ENCODE measurements at regions of chr10 and their contacts with region 1.

Region 1: GRCh38 chr10:80444646-80445319 is 9.3 kb upstream of the TSPAN14 start:
- DNase-seq: peak; percentile 69 to 82 (median 77)
- H3K4me3 ChIP-seq: no peak overlapping the region
- H3K4me3 Mint-ChIP-seq: peak overlapping the region in 1 of 2 donors; percentile 40
- H3K27ac ChIP-seq: no peak overlapping the region
- H3K27ac Mint-ChIP-seq: peak overlapping the region in 2 of 7 donors; percentile 43 to 60
- H3K4me1 ChIP-seq: peaks cover 33 to 47% of the 10 kb centered on the region in 2 donors
- H3K4me1 Mint-ChIP-seq: peaks cover 44% of the 10 kb centered on the region
- H3K27me3 ChIP-seq: no peaks in the 10 kb centered on the region
- H3K27me3 Mint-ChIP-seq: peaks cover 2 to 3% (median 2%) of the 10 kb centered on the region in 3 donors
- CTCF ChIP-seq: peak; percentile 72

Region 2: DNA sequence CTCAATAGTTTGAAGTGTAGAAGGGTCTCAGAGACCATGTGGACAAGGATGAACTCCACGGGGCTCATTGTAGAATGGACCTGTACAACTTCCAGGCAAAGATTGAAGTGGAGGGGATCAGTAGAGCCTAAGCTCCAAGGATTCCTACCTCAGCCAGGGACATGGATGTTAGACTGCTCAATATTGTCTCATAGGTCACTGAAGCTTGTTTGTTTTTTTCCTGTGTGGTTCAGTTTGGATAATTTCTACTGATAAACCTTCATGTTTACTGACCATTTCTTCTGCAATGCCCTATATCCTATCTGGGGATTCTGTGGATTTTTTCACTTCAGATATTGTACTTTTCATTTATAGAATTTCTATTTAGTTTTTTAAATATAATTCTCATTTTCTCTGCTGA is 79.3 kb before region 1 on chr10:
- intact Hi-C with region 1: no loop called
- DNase-seq: no peak
- H3K4me3 ChIP-seq: no peak overlapping the region
- H3K4me3 Mint-ChIP-seq: peak overlapping the region in 1 of 2 donors; percentile 39
- H3K27ac ChIP-seq: no peak overlapping the region
- H3K27ac Mint-ChIP-seq: no peak overlapping the region
- H3K4me1 ChIP-seq: no peaks in the 10 kb centered on the region
- H3K4me1 Mint-ChIP-seq: no peaks in the 10 kb centered on the region
- H3K27me3 ChIP-seq: no peaks in the 10 kb centered on the region
- H3K27me3 Mint-ChIP-seq: peaks cover 0 to 3% (median 2%) of the 10 kb centered on the region in 3 donors
- CTCF ChIP-seq: no peak

Region 3: DNA sequence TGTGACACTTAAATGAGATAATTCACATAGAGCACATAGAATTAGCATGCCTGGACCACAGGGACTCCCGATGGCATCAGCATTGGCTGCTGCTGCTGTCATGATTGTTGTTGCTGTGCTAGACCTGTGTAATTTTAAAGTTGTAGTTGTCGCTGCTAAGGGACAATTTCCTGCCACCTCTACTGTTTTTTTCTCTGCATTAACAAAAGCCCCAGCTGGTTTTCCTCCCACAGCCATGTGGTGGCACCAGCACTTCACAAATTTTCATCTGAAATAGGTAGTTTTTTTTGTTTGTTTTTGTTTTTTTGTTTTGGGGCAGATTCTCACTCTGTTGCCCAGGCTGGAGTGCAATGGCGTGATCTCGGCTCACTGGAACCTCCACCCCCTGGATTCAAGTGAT is 61.8 kb before region 1 on chr10:
- intact Hi-C with region 1: loop called in 1 of 2 experiments (anchors 2 kb)
- DNase-seq: peak; percentile 27 to 50 (median 45)
- H3K4me3 ChIP-seq: no peak overlapping the region
- H3K4me3 Mint-ChIP-seq: peak overlapping the region in 1 of 2 donors; percentile 1
- H3K27ac ChIP-seq: no peak overlapping the region
- H3K27ac Mint-ChIP-seq: peak overlapping the region in 1 of 7 donors; percentile 50
- H3K4me1 ChIP-seq: peaks cover 5 to 9% of the 10 kb centered on the region in 2 donors
- H3K4me1 Mint-ChIP-seq: peaks cover 20% of the 10 kb centered on the region
- H3K27me3 ChIP-seq: no peaks in the 10 kb centered on the region
- H3K27me3 Mint-ChIP-seq: peaks cover 2 to 4% (median 3%) of the 10 kb centered on the region in 3 donors
- CTCF ChIP-seq: peak; percentile 68

Region 4: DNA sequence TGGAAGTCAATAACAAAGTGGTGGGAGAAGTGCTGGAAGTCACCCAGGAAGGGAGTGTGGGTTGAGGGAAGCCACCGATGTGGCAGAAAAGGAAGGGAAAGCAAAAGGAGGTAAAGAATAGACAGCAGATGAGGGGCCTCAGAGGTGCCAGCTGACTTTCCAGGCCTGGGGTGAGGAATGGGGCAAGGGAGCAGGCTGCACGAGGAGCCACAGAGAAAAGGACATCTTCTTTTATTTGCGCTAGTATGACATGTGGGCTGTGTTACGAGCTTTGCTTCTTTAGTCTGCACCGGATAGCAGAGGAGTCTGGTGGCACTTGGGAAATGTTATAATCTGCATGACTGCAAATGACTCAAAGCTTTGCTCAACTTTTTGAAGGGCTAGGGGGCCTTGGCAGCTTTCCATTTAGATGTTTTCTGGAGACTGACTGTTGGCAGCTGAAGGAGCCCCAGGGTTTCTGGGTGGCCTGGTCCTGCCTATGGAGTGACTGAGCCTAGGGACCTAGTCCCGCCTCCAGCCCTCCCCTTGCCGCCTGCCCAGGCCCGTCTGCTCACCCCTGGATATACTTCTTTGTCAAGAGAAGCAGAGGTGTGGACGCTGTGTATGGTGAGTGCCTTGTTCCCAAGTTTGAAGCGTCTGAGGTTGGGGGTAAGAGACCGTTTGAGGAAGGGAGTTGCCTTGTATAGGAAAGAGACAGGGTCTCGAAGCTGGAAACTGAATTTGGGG is 31.3 kb before region 1 on chr10:
- intact Hi-C with region 1: no loop called
- DNase-seq: no peak
- H3K4me3 ChIP-seq: no peak overlapping the region
- H3K4me3 Mint-ChIP-seq: peak overlapping the region; percentile 17 to 63
- H3K27ac ChIP-seq: no peak overlapping the region
- H3K27ac Mint-ChIP-seq: peak overlapping the region in 1 of 7 donors; percentile 18
- H3K4me1 ChIP-seq: peaks cover 12 to 22% of the 10 kb centered on the region in 2 donors
- H3K4me1 Mint-ChIP-seq: peaks cover 23% of the 10 kb centered on the region
- H3K27me3 ChIP-seq: peaks cover 0 to 16% of the 10 kb centered on the region in 2 donors
- H3K27me3 Mint-ChIP-seq: peaks cover 12 to 25% (median 18%) of the 10 kb centered on the region in 3 donors
- CTCF ChIP-seq: no peak

Region 5: GRCh38 chr10:80477813-80478212 is 33.0 kb after region 1 on chr10:
- intact Hi-C with region 1: loop called in 1 of 2 experiments (anchors 1 kb)
- DNase-seq: peak in 2 of 3 donors; percentile 64 to 88
- H3K4me3 ChIP-seq: no peak overlapping the region
- H3K4me3 Mint-ChIP-seq: no peak overlapping the region
- H3K27ac ChIP-seq: peak overlapping the region in 1 of 2 donors; percentile 78
- H3K27ac Mint-ChIP-seq: peak overlapping the region in 5 of 7 donors; percentile 20 to 64 (median 51)
- H3K4me1 ChIP-seq: peaks cover 25 to 47% of the 10 kb centered on the region in 2 donors
- H3K4me1 Mint-ChIP-seq: peaks cover 69% of the 10 kb centered on the region
- H3K27me3 ChIP-seq: no peaks in the 10 kb centered on the region
- H3K27me3 Mint-ChIP-seq: no peaks in the 10 kb centered on the region
- CTCF ChIP-seq: no peak

Region 6: GRCh38 chr10:80504158-80504811 is 59.5 kb after region 1 on chr10:
- intact Hi-C with region 1: loop called (anchors 2 kb)
- DNase-seq: peak; percentile 71 to 77 (median 71)
- H3K4me3 ChIP-seq: peak overlapping the region in 1 of 3 experiments; percentile 60
- H3K4me3 Mint-ChIP-seq: peak overlapping the region in 1 of 2 donors; percentile 83
- H3K27ac ChIP-seq: peak overlapping the region; percentile 92 to 95
- H3K27ac Mint-ChIP-seq: peak overlapping the region; percentile 90 to 99 (median 94)
- H3K4me1 ChIP-seq: peaks cover 66 to 67% of the 10 kb centered on the region in 2 donors
- H3K4me1 Mint-ChIP-seq: peaks cover 76% of the 10 kb centered on the region
- H3K27me3 ChIP-seq: no peaks in the 10 kb centered on the region
- H3K27me3 Mint-ChIP-seq: no peaks in the 10 kb centered on the region
- CTCF ChIP-seq: no peak

Region 7: GRCh38 chr10:80529604-80530003 is 84.8 kb after region 1 on chr10:
- intact Hi-C with region 1: loop called in 1 of 2 experiments (anchors 5 kb)
- DNase-seq: peak; percentile 70 to 78 (median 73)
- H3K4me3 ChIP-seq: peak overlapping the region in 1 of 3 experiments; percentile 11
- H3K4me3 Mint-ChIP-seq: peak overlapping the region; percentile 16 to 60
- H3K27ac ChIP-seq: peak overlapping the region; percentile 34 to 86
- H3K27ac Mint-ChIP-seq: peak overlapping the region; percentile 68 to 90 (median 73)
- H3K4me1 ChIP-seq: peaks cover 59 to 63% of the 10 kb centered on the region in 2 donors
- H3K4me1 Mint-ChIP-seq: peaks cover 65% of the 10 kb centered on the region
- H3K27me3 ChIP-seq: no peaks in the 10 kb centered on the region
- H3K27me3 Mint-ChIP-seq: no peaks in the 10 kb centered on the region
- CTCF ChIP-seq: no peak

Region 8: DNA sequence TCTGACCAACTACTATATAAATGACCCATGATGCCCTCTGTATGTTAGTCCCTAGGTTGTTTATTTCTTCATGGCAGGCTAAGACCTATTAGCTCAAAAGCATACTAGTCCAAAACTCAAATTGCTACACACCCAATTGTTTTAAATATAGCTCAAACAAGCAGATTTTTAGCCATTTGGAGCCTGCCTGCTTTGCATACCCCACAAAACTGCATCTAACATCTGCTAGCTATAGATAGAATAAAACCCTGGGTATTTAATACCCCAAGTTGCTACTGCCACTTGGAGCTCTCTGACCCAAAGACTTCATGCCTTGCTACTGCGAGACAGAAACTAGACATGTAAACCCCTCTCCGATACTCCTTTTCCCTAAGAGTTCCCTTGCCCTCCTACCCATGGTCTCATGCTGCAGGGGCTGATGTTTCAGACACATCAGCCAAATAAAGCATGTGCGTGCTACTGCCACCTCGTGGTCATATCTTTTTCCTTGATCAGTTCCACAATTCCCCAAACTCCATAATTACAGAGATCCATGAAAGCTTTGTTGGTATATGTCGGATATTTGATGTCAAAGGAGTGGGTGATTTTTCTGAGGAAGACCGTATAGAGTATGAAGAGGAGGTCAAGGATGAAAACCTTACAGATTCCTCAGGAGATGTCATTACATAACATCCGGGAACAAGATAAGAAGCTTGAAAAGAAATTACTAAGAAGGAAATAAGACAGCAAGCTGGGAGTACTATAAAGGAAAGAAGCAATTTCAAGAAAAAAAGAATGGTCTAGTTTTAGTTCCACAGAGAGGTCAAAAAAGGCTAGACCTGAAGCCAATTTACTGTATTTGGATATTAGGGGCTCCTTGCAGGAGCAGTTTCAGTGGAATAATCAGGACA is 479.5 kb after region 1 on chr10:
- intact Hi-C with region 1: loop called in 1 of 2 experiments (anchors 10 kb)
- DNase-seq: peak; percentile 10 to 28 (median 27)
- H3K4me3 ChIP-seq: no peak overlapping the region
- H3K4me3 Mint-ChIP-seq: no peak overlapping the region
- H3K27ac ChIP-seq: no peak overlapping the region
- H3K27ac Mint-ChIP-seq: no peak overlapping the region
- H3K4me1 ChIP-seq: no peaks in the 10 kb centered on the region
- H3K4me1 Mint-ChIP-seq: no peaks in the 10 kb centered on the region
- H3K27me3 ChIP-seq: no peaks in the 10 kb centered on the region
- H3K27me3 Mint-ChIP-seq: peaks cover 0 to 5% (median 2%) of the 10 kb centered on the region in 3 donors
- CTCF ChIP-seq: peak; percentile 73

Measured in CD14-positive monocyte (primary cell).